Ascending aorta (tissue), 2 donors: ENCODE measurements at regions of chr9 and their contacts with region 1.

Region 1: GRCh38 chr9:121765021-121765950 is 113.9 kb downstream of the DAB2IP start:
- DNase-seq: peak in 1 of 2 donors; percentile 86
- H3K4me3 ChIP-seq: no peak overlapping the region
- H3K27ac ChIP-seq: peak overlapping the region; percentile 68 to 83
- H3K4me1 ChIP-seq: peaks cover 6 to 25% of the 10 kb centered on the region in 2 donors
- H3K27me3 ChIP-seq: no peaks in the 10 kb centered on the region
- CTCF ChIP-seq: no peak

Region 2: DNA sequence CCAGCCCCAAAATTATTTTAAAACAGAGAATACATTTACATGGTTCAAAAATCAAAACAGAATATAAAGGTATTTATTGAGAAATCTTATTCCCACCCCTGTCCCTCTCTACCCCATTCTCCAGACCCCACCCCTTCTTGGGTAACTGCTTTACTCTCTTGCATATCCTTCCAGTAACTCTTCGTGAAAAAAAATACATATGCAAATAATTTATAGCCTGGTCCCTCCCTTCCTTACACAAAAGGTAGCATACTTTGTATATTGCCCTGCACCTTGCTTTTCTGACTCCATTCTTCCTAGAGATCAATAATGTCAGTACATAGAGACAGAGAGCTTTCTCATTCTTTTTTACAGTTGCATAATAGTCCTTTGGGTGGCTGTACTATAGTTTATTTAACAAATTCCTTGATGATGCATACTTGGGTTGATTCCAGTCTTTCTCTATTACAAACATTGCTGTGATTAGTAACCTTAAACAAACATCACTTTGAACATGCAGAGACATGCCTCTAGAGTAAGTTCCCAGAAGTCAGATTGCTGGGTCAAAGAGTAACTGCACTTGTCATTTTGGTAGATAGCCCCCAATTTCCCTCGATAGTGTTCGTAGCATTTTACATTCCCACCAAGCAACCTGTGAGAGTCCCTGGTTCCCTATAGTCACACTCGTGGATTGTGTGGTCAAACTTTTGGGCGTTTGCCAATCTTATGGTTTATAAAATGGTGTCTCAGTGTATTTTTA is 443.1 kb before region 1 on chr9:
- intact Hi-C with region 1: no loop called
- DNase-seq: peak in 1 of 2 donors; percentile 62
- H3K4me3 ChIP-seq: no peak overlapping the region
- H3K27ac ChIP-seq: peak overlapping the region; percentile 98 to 99
- H3K4me1 ChIP-seq: peaks cover 26 to 78% of the 10 kb centered on the region in 2 donors
- H3K27me3 ChIP-seq: no peaks in the 10 kb centered on the region
- CTCF ChIP-seq: no peak

Region 3: DNA sequence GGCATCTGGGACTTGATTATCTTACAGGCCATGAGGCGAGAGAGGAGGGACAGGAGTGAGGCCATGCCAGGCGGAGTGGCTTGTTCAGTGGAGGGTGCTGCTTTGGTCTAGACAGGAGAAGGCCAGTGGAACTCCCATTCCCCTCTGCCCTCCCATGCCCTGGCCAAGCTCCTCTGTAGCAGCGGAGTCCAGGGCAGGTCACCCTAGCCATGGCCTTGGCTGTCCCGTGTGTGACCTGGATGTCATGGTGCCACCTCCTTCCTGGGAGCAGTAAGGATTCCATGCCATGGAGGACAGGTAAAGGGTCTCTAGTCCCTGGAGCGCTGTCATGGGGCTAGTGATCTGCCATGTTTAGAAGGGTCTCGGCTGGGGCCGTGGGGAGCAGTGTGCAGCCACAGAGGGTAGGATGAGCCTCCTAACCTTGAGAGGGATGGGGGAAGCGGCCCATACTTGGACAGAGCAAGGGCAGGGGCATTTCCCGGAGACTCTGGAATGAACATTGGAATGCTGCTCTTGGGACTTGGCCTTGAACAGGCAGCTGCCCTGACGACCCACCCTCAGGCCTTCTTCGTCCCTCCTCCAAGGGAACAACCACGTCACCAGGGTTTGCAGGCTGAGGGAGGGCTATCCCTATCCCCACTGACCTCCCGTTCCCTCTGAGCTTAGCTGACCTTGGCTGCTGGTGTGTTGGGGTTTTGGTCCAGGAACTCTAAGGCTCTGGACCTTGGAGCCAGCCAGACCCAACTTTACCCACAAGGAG is 13.4 kb before region 1 on chr9:
- intact Hi-C with region 1: loop called (anchors 1 kb)
- DNase-seq: peak in 1 of 2 donors; percentile 82
- H3K4me3 ChIP-seq: no peak overlapping the region
- H3K27ac ChIP-seq: peak overlapping the region; percentile 94 to 96
- H3K4me1 ChIP-seq: peaks cover 51 to 89% of the 10 kb centered on the region in 2 donors
- H3K27me3 ChIP-seq: no peaks in the 10 kb centered on the region
- CTCF ChIP-seq: no peak